Calu3 (cell line): ENCODE measurements at regions of chr6 and their contacts with region 1.

Region 1: DNA sequence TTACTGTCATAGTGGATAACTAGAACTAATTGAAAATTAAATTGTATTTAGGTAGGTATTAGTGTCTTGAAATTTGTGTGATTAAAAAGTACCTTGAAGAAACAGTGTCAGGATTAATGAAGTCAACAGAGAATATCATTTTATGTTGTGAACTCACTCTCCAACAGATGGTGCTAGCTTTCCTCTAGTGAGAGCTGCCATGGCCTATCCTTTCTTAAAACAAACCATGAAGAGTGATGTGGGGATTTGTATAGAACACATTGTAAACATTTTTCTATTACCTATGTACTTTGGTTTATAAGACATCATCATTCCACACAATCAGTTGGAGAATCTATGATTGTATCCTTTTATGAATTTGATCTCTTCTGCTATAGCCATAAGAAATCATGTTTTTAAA is 4.8 kb upstream of the SRSF12 start:
- DNase-seq: peak; percentile 11
- H3K4me3 Mint-ChIP-seq: no peak overlapping the region
- H3K27ac Mint-ChIP-seq: no peak overlapping the region
- H3K4me1 Mint-ChIP-seq: peaks cover 23% of the 10 kb centered on the region
- H3K27me3 Mint-ChIP-seq: no peaks in the 10 kb centered on the region
- CTCF ChIP-seq: peak; percentile 28

Region 2: GRCh38 chr6:88982720-88983119 is 139.9 kb before region 1 on chr6:
- CTCF ChIA-PET with region 1: interaction called, 12 read pairs
- intact Hi-C with region 1: loop called (anchors 1 kb)
- DNase-seq: no peak
- H3K4me3 Mint-ChIP-seq: no peak overlapping the region
- H3K27ac Mint-ChIP-seq: no peak overlapping the region
- H3K4me1 Mint-ChIP-seq: peaks cover 14% of the 10 kb centered on the region
- H3K27me3 Mint-ChIP-seq: no peaks in the 10 kb centered on the region
- CTCF ChIP-seq: no peak

Region 3: DNA sequence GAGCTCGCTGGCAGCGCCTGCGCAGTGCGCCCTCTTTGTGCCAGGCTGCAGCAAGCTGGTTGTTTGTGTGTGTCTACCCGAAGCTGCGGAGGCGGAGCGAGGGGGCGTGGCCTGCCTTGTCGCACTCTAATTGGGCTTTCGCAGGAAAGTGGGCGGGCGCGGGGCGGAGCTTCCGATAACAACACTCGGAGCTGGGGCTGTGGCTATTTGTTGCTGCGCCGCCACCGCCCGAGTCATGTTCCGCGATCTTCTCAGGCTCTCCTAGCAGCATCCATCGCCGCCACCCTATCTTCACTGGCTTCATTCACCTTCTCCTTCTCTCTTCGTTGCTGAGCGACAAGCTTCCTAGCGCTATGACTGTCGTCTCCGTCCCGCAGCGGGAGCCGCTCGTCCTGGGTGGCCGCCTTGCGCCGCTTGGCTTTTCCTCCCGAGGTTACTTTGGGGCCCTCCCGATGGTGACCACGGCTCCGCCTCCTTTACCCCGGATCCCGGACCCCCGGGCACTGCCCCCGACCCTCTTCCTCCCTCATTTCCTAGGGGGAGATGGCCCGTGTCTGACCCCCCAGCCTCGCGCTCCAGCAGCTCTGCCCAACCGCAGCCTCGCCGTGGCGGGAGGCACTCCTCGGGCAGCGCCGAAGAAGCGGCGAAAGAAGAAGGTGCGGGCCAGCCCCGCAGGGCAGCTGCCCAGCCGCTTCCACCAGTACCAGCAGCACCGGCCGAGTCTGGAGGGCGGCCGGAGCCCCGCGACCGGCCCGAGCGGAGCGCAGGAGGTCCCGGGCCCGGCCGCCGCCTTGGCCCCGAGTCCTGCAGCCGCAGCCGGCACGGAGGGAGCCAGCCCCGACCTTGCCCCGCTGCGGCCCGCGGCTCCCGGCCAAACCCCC is 41.8 kb before region 1 on chr6 and contains the start of gene PNRC1:
- CTCF ChIA-PET with region 1: interaction called, 4 read pairs
- intact Hi-C with region 1: loop called (anchors 5 kb)
- DNase-seq: peak; percentile 99
- H3K4me3 Mint-ChIP-seq: peak within 1 kb of the TSS; percentile 86
- H3K27ac Mint-ChIP-seq: peak within 1 kb of the TSS; percentile 87
- H3K4me1 Mint-ChIP-seq: peaks cover 10% of the 10 kb centered on the region
- H3K27me3 Mint-ChIP-seq: no peaks in the 10 kb centered on the region
- CTCF ChIP-seq: no peak
- total RNA-seq, gene PNRC1: 45.4 and 46.2 TPM in 2 replicates

Region 4: DNA sequence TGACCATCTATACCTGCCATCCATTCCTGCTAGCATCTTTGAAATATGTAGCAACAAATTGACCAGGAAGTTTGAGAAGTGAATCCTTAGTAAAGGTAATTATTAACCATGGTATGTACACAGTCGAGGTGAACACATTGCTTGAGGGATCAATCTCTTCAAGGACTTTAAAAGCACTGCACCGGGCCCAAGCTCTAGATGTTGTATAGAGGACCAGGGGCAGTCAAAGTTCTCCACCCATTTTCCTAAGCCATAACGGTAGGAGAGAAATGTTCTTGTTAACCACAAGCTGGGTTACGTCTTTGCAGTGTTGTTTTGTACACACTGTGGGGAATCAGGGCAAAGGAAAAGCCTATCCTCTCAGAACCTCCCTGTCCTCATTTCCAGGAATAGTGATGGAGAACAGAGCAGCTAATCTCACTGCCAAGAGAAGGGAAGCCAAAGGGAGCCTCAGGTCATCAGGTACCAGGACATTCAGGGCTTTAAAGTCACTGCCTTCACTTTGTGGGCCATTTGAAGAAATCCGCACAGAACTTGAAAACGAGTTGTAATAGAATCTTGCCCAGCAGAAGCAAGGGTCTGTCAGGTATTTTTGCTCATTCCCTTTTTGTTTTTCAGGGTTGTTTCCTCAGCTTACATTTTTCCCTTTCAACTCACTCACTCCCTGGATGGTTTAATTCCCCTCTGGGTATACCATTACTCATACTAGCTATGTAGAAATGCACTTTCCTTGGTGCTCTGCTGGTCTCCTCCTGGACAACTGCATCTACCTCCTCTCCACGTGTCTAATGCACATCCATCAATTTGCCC is 17.9 kb after region 1 on chr6:
- CTCF ChIA-PET with region 1: interaction called, 5 read pairs
- intact Hi-C with region 1: loop called (anchors 2 kb)
- DNase-seq: no peak
- H3K4me3 Mint-ChIP-seq: no peak overlapping the region
- H3K27ac Mint-ChIP-seq: peak overlapping the region; percentile 9
- H3K4me1 Mint-ChIP-seq: peaks cover 29% of the 10 kb centered on the region
- H3K27me3 Mint-ChIP-seq: no peaks in the 10 kb centered on the region
- CTCF ChIP-seq: no peak

Region 5: GRCh38 chr6:89242574-89243330 is 120.1 kb after region 1 on chr6:
- CTCF ChIA-PET with region 1: interaction called, 5 read pairs
- intact Hi-C with region 1: loop called (anchors 1 kb)
- DNase-seq: peak; percentile 21
- H3K4me3 Mint-ChIP-seq: no peak overlapping the region
- H3K27ac Mint-ChIP-seq: no peak overlapping the region
- H3K4me1 Mint-ChIP-seq: peaks cover 17% of the 10 kb centered on the region
- H3K27me3 Mint-ChIP-seq: no peaks in the 10 kb centered on the region
- CTCF ChIP-seq: peak; percentile 31